ENCODE measurements at regions of chr7 and their contacts with region 1.

Region 1: GRCh38 chr7:35588647-35589046 is 106.3 kb downstream of the HERPUD2 start:
- DNase-seq: no peak
- ATAC-seq: no peak
- H3K4me3 ChIP-seq: no peak overlapping the region
- H3K4me3 Mint-ChIP-seq: no peak overlapping the region
- H3K27ac ChIP-seq: no peak overlapping the region
- H3K27ac Mint-ChIP-seq: no peak overlapping the region
- H3K4me1 ChIP-seq: no peaks in the 10 kb centered on the region
- H3K4me1 Mint-ChIP-seq: no peaks in the 10 kb centered on the region
- H3K27me3 ChIP-seq: no peaks in the 10 kb centered on the region
- H3K27me3 Mint-ChIP-seq: peaks cover 0 to 2% of the 10 kb centered on the region in 2 donors

Region 2: DNA sequence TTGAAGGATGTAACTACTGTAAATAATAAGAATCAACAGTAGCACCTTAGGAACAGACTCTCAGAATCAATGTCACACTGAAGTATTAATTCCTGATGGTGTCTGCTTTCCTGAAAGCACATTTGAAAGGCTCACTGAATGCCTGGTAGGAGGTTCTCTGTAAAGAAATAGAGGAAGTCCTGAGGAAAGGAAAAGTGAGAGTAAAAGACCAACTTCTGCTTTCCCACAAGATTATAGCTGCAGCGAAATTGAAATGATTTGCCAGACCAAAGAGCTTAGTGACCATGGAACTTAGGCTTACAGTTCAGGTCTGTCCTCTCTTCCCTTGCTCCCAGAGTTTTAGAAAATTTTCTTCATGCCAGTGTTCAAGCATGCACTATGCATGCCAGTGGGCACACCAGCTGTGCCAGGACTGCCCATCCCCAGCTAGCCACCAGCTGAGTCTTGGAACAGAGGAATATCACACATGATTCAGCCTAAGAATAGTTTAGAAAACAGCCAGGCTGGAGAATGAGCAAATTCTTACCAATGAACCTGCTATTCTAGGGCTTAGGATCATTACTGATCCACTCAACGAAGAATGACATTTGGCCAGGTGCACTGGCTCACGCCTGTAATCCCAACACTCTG is 16.9 kb before region 1 on chr7:
- CTCF ChIA-PET with region 1: no interaction called
- POLR2A ChIA-PET with region 1: no interaction called
- DNase-seq: no peak
- ATAC-seq: no peak
- H3K4me3 ChIP-seq: no peak overlapping the region
- H3K4me3 Mint-ChIP-seq: no peak overlapping the region
- H3K27ac ChIP-seq: no peak overlapping the region
- H3K27ac Mint-ChIP-seq: no peak overlapping the region
- H3K4me1 ChIP-seq: no peaks in the 10 kb centered on the region
- H3K4me1 Mint-ChIP-seq: no peaks in the 10 kb centered on the region
- H3K27me3 ChIP-seq: no peaks in the 10 kb centered on the region
- H3K27me3 Mint-ChIP-seq: peaks cover 11 to 12% of the 10 kb centered on the region in 2 donors

Region 3: DNA sequence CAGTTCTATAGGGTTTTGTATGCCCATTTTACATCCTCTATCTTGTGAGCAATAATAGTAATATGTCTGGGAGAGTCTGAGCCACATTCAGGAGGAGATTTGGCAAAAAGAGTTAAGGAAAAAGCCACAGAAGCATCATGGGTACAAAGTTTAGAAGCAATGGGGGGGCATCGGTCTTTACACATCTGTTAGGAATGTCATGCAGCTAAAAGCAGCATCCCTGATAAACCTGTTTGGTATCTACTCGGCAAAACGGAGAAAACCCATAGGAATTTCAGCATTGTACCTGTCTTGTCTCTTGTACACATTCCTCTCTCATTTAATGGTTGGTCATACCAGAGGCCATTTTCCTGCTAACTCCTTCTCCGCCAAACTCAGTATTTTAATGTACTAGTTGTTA is 118.8 kb after region 1 on chr7:
- CTCF ChIA-PET with region 1: no interaction called
- POLR2A ChIA-PET with region 1: interaction called in 1 of 2 experiments, 10 read pairs
- DNase-seq: no peak
- ATAC-seq: no peak
- H3K4me3 ChIP-seq: no peak overlapping the region
- H3K4me3 Mint-ChIP-seq: no peak overlapping the region
- H3K27ac ChIP-seq: no peak overlapping the region
- H3K27ac Mint-ChIP-seq: no peak overlapping the region
- H3K4me1 ChIP-seq: peaks cover 5 to 12% of the 10 kb centered on the region in 2 experiments
- H3K4me1 Mint-ChIP-seq: peaks cover 19 to 26% (median 21%) of the 10 kb centered on the region in 3 donors
- H3K27me3 ChIP-seq: no peaks in the 10 kb centered on the region
- H3K27me3 Mint-ChIP-seq: no peaks in the 10 kb centered on the region

Measured in T-cell (primary cell).